Activated CD4-positive, alpha-beta T cell treated with anti-CD3 and anti-CD28 coated beads, Interleukin-2, amount 10 ng/mL, durations not matched to agents 7 days and 5 days (primary cell): ENCODE measurements at regions of chr10 and their contacts with region 1.

Region 1: GRCh38 chr10:6542999-6543430 is 37.1 kb downstream of the PRKCQ start:
- DNase-seq: peak; percentile 79
- H3K4me3 Mint-ChIP-seq: peak overlapping the region; percentile 81
- H3K27ac Mint-ChIP-seq: peak overlapping the region; percentile 100
- H3K4me1 Mint-ChIP-seq: peaks cover 82% of the 10 kb centered on the region
- H3K27me3 Mint-ChIP-seq: no peaks in the 10 kb centered on the region

Region 2: GRCh38 chr10:6530211-6530840 is 12.7 kb before region 1 on chr10:
- CTCF ChIA-PET with region 1: interaction called, 33 read pairs
- POLR2A ChIA-PET with region 1: interaction called, 3 read pairs
- DNase-seq: peak; percentile 90
- H3K4me3 Mint-ChIP-seq: peak overlapping the region; percentile 75
- H3K27ac Mint-ChIP-seq: peak overlapping the region; percentile 97
- H3K4me1 Mint-ChIP-seq: peaks cover 84% of the 10 kb centered on the region
- H3K27me3 Mint-ChIP-seq: no peaks in the 10 kb centered on the region